ENCODE measurements at regions of chr7 and their contacts with region 1.

Region 1: GRCh38 chr7:22082886-22083703 is 137.4 kb upstream of the CDCA7L start:
- DNase-seq: peak; percentile 65 to 75
- ATAC-seq: peak; percentile 96 to 98
- H3K4me3 ChIP-seq: peak overlapping the region; percentile 46
- H3K27ac ChIP-seq: peak overlapping the region; percentile 52 to 77
- H3K4me1 ChIP-seq: no peaks in the 10 kb centered on the region
- CTCF ChIP-seq: peak; percentile 90
- EP300 ChIP-seq: no peak
- POLR2A ChIP-seq: no peak; the same call in 1 of the 2 replicates
- RAD21 ChIP-seq: peak; percentile 60 to 82

Region 2: DNA sequence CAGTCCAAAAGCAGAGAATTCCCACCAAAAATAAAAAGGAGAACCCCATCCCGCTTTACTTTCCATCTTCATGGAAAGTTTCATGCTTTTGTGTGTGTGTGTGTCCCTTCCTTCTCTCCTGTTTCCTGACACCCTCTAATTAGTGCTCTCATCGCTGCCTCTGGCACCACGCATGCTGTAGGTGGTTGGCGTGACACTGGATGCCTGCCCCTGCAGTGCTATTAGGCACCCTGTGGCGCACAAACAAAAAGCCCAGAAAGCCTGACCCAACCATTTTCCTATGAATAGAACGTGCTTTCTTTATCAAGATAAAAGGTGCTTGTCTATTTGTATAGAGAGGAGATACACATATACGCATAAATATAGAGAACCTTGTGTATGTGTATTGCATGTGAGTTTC is 16.6 kb before region 1 on chr7:
- CTCF ChIA-PET with region 1: interaction called, 12 read pairs
- POLR2A ChIA-PET with region 1: no interaction called
- DNase-seq: no peak
- ATAC-seq: no peak
- H3K4me3 ChIP-seq: no peak overlapping the region
- H3K27ac ChIP-seq: no peak overlapping the region
- H3K4me1 ChIP-seq: no peaks in the 10 kb centered on the region
- CTCF ChIP-seq: no peak
- EP300 ChIP-seq: no peak
- POLR2A ChIP-seq: no peak
- RAD21 ChIP-seq: no peak

Region 3: GRCh38 chr7:22094413-22095342 is 11.6 kb after region 1 on chr7:
- CTCF ChIA-PET with region 1: interaction called, 31 read pairs
- POLR2A ChIA-PET with region 1: no interaction called
- DNase-seq: no peak
- ATAC-seq: peak in 1 of 2 experiments; percentile 61; a peak in 3 of 6 replicates
- H3K4me3 ChIP-seq: no peak overlapping the region
- H3K27ac ChIP-seq: no peak overlapping the region
- H3K4me1 ChIP-seq: no peaks in the 10 kb centered on the region
- CTCF ChIP-seq: no peak
- EP300 ChIP-seq: no peak
- POLR2A ChIP-seq: no peak
- RAD21 ChIP-seq: no peak

Region 4: DNA sequence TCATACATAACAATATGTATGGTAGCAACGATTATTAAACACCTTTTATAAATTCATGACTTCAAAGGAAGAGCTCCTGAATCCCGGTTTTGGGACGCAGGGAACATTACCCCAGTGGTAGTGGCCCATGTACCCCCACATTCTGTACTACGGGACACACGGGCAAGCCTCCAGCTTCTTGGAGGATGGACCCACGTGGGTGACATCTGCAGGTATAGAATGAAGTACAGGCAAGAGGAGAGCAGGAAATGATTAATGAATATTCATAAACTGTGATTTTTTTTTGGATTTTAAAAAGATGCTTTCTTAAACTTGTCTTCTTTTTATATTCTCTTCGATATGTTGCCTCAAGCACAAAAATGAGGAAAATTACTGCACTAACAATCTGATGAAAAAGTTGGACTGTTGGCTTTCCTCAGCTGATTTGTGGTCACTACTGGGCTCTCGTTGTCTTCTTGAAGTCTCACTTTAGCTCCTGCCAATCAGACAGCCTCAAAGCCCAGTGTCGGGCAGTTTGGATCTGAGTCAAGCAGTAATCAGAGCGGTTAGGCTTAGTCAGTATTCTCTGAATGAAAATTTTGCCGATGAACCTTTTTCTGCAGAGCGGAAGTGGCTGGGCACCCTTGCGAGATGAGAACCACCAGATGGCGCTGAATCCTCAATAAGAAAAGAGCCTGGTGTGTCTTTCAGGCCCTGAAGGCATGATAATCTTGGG is 20.3 kb after region 1 on chr7:
- CTCF ChIA-PET with region 1: interaction called, 13 read pairs
- POLR2A ChIA-PET with region 1: no interaction called
- DNase-seq: peak; percentile 65 to 73
- ATAC-seq: peak; percentile 86 to 98
- H3K4me3 ChIP-seq: no peak overlapping the region
- H3K27ac ChIP-seq: no peak overlapping the region
- H3K4me1 ChIP-seq: no peaks in the 10 kb centered on the region
- CTCF ChIP-seq: peak; percentile 64
- EP300 ChIP-seq: no peak
- POLR2A ChIP-seq: no peak
- RAD21 ChIP-seq: peak; percentile 59 to 64

Measured in A549 (cell line).